ENCODE measurements at regions of chr6 and their contacts with region 1.

Region 1: DNA sequence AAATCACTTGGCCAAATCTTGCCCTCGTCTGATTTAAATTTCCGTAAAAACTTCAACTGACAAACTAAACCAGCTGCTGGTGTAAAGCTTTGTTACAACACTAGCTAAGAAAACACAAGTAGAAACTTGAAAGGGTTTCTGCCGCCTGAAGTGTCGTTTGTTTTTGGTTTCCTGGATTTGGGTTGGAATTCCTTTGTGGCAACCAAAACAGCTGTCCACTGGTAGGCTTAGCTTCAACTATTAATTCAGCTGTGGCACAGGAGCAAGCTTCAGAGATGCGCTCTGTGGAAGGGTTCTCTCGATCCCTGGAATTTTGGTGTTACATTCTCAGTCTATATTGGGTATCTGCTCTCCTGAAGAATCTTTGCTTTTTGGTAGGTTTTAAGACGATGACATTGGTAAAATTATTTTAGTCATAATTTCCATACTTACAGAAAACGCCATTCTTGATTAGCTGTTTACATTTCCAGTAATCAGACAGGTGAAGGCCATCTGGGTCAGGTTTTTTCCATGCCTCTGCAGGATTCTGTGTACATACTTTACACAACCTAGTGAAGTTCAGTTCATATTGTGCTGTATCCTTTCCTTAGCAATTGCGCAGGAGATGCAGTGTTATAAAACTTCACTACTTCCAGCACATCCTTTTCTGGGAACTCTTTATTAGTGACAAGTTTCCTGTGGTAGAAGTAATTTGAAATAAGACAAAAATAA is 29.9 kb upstream of the SAMD3 start:
- DNase-seq: no peak
- H3K4me3 ChIP-seq: no peak overlapping the region
- H3K27ac ChIP-seq: no peak overlapping the region
- H3K4me1 ChIP-seq: no peaks in the 10 kb centered on the region
- H3K27me3 ChIP-seq: no peaks in the 10 kb centered on the region
- CTCF ChIP-seq: no peak

Region 2: GRCh38 chr6:130223508-130223907 is 29.2 kb before region 1 on chr6:
- intact Hi-C with region 1: loop called (anchors 1 kb)
- DNase-seq: no peak
- H3K4me3 ChIP-seq: no peak overlapping the region
- H3K27ac ChIP-seq: no peak overlapping the region
- H3K4me1 ChIP-seq: no peaks in the 10 kb centered on the region
- H3K27me3 ChIP-seq: no peaks in the 10 kb centered on the region
- CTCF ChIP-seq: no peak